ENCODE measurements at regions of chr11 and their contacts with region 1.

Region 1: GRCh38 chr11:123511037-123511870 is 81.2 kb downstream of the GRAMD1B start:
- DNase-seq: peak; percentile 86
- ATAC-seq: peak; percentile 100
- H3K4me3 Mint-ChIP-seq: no peak overlapping the region
- H3K27ac Mint-ChIP-seq: no peak overlapping the region
- H3K4me1 Mint-ChIP-seq: peaks cover 8% of the 10 kb centered on the region
- H3K27me3 Mint-ChIP-seq: no peaks in the 10 kb centered on the region
- CTCF ChIP-seq: peak; percentile 98

Region 2: GRCh38 chr11:123560006-123560405 is 48.8 kb after region 1 on chr11:
- CTCF ChIA-PET with region 1: interaction called, 21 read pairs
- POLR2A ChIA-PET with region 1: no interaction called
- intact Hi-C with region 1: no loop called
- DNase-seq: peak; percentile 61
- ATAC-seq: peak; percentile 90
- H3K4me3 Mint-ChIP-seq: peak overlapping the region; percentile 50
- H3K27ac Mint-ChIP-seq: no peak overlapping the region
- H3K4me1 Mint-ChIP-seq: peaks cover 10% of the 10 kb centered on the region
- H3K27me3 Mint-ChIP-seq: peaks cover 3% of the 10 kb centered on the region
- CTCF ChIP-seq: no peak

Region 3: DNA sequence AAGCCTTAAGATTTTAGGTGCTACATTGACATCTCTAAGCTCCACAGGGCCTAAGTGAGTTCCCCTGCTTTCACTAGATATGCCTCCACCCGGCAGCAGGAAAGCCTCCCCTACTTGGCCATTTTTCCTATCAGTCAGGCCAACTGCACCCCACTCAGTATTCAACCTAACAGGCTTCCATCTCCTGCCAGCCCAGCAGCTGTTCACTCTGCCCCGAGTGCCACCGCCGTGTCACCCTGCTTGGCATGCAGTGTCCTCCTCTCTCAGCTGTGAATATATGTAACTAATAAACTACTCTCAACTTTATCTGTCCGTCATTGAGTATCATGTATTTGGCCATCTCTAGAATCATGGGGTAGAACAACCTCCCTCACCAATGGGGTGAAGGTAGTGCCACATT is 303.9 kb after region 1 on chr11:
- CTCF ChIA-PET with region 1: no interaction called
- POLR2A ChIA-PET with region 1: no interaction called
- intact Hi-C with region 1: no loop called
- DNase-seq: no peak
- ATAC-seq: no peak
- H3K4me3 Mint-ChIP-seq: no peak overlapping the region
- H3K27ac Mint-ChIP-seq: no peak overlapping the region
- H3K4me1 Mint-ChIP-seq: no peaks in the 10 kb centered on the region
- H3K27me3 Mint-ChIP-seq: peaks cover 7% of the 10 kb centered on the region
- CTCF ChIP-seq: no peak

Measured in activated CD8-positive, alpha-beta T cell treated with anti-CD3 and anti-CD28 coated beads for 36 hours (primary cell).